ENCODE measurements at regions of chr1 and their contacts with region 1.

Region 1: DNA sequence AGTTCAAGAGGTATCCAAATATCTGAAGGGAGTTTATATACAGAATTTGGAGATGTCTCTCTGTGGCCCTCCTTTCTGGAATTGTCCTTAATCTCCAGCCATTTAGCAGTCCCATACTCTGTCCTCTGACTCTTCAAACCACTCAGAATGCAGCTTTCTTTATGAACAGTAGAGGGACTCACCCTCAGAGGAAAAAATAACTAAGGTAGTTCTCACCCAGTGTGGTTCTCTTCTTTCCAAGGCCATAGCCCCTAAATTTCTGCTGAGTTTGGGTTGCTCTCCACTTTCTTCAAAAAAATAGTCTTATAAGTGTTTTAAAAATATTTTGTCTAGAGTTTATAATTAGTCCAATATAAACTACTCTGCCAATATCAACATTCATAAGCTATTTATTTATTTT is 369.7 kb downstream of the MATN1 start:
- DNase-seq: no peak
- H3K4me3 ChIP-seq: no peak overlapping the region
- H3K4me3 Mint-ChIP-seq: no peak overlapping the region
- H3K27ac Mint-ChIP-seq: no peak overlapping the region
- H3K4me1 ChIP-seq: no peaks in the 10 kb centered on the region
- H3K4me1 Mint-ChIP-seq: no peaks in the 10 kb centered on the region
- H3K27me3 ChIP-seq: no peaks in the 10 kb centered on the region
- H3K27me3 Mint-ChIP-seq: peaks cover 6% of the 10 kb centered on the region
- CTCF ChIP-seq: peak in 1 of 2 experiments; percentile 20

Region 2: GRCh38 chr1:30302858-30303786 is 50.5 kb before region 1 on chr1:
- CTCF ChIA-PET with region 1: no interaction called
- POLR2A ChIA-PET with region 1: no interaction called
- intact Hi-C with region 1: no loop called
- DNase-seq: no peak
- H3K4me3 ChIP-seq: no peak overlapping the region
- H3K4me3 Mint-ChIP-seq: no peak overlapping the region
- H3K27ac Mint-ChIP-seq: no peak overlapping the region
- H3K4me1 ChIP-seq: no peaks in the 10 kb centered on the region
- H3K4me1 Mint-ChIP-seq: no peaks in the 10 kb centered on the region
- H3K27me3 ChIP-seq: no peaks in the 10 kb centered on the region
- H3K27me3 Mint-ChIP-seq: peaks cover 5% of the 10 kb centered on the region
- CTCF ChIP-seq: no peak

Region 3: DNA sequence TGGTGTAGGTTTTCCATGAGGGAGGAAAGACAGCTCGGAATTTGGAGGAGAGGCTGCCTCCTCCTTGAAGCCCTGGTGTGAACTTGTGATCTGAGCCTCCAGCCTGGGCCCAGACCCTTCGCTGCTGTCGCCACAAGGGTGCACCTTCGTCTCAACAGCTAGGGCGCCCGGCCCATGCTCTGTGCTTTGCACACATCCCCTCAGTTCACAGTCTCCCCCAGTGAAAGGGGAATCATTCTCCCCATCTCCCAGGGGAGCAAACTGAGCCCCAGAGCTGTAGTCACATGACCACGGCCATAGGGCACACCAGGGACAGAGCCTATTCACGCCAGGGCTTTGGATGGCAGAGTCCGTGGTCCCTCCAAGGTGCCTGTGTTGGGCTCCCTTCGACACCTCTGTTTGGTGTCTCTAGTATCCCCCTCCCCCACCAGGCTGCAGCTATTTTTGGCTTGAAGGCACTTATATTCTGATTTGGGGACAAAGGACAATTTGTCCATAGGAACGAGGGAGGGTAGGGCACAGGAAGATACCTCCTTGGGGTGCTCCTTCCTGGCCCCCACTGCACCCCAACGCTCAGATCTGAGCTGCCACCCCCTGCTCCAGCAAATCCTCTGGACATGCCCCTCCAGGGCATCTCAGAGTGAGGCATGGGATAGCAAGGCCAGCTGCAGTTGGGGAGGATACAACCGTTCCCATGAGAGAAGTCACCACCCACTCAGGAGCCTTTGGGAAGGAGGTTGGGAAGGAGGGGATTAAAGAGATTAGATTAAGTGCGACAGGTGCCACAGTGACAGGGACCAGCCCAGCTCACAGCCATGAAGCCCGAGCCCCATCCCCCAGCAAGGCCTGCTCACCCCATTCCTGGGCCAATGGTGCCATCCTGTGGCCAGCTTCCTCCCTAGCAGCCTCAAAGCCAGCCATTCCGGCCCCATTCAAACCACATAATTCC is 354.0 kb after region 1 on chr1:
- CTCF ChIA-PET with region 1: no interaction called
- POLR2A ChIA-PET with region 1: no interaction called
- intact Hi-C with region 1: loop called (anchors 10 kb)
- DNase-seq: peak; percentile 65 to 78
- H3K4me3 ChIP-seq: no peak overlapping the region
- H3K4me3 Mint-ChIP-seq: no peak overlapping the region
- H3K27ac Mint-ChIP-seq: no peak overlapping the region
- H3K4me1 ChIP-seq: no peaks in the 10 kb centered on the region
- H3K4me1 Mint-ChIP-seq: no peaks in the 10 kb centered on the region
- H3K27me3 ChIP-seq: no peaks in the 10 kb centered on the region
- H3K27me3 Mint-ChIP-seq: peaks cover 12% of the 10 kb centered on the region
- CTCF ChIP-seq: peak; percentile 63 to 70